Activated CD8-positive, alpha-beta memory T cell treated with anti-CD3 and anti-CD28 coated beads, Interleukin-2, amount 10 ng/mL, durations not matched to agents 7 days and 5 days (primary cell): ENCODE measurements at regions of chr13 and their contacts with region 1.

Region 1: DNA sequence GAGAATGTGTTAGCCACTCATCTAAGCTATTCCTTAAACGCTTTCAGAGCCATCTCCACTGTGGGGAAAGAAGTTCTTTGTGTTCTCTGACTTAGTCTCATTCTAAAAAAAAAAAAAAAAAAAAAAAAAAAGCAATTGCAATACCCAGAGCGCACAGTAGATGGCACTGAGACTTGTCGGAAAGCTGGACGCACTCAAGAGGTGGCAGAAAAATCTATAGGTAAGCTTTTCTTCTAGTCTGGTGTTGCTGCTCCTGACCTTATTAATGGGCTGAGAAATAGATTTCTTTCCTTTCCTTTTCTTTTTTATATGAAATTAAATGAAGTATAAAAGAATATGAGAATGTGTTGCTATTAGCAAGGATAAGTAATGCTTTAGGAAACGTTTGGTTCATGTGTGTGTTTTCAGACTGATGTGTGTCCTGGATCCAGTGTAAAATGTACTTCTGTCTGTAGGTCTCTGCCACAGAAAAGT is 4.7 kb upstream of the GJB2 start:
- DNase-seq: no peak
- ATAC-seq: peak; percentile 48
- H3K4me3 Mint-ChIP-seq: no peak overlapping the region
- H3K27ac Mint-ChIP-seq: no peak overlapping the region
- H3K4me1 Mint-ChIP-seq: peaks cover 21% of the 10 kb centered on the region
- H3K27me3 Mint-ChIP-seq: peaks cover 51% of the 10 kb centered on the region

Region 2: DNA sequence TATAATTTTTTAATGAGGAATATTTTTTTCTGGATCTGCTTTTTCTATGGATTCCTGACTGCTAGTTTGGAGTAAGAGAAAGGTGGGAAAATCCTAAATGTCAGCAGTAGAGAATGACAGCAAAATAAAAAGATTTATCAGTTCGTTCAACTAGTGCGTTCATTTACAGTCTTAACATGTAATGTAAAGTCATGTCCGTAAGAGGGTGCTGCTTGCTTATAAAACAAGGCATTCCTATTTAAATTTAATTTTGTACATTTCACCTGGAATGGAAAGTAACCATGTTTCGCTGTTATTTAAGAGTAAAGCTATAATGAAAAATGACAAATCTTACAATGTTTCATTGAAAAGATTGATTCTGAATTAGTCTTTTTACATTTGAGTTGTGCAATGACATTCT is 162.3 kb before region 1 on chr13:
- CTCF ChIA-PET with region 1: no interaction called
- DNase-seq: no peak
- ATAC-seq: no peak
- H3K4me3 Mint-ChIP-seq: no peak overlapping the region
- H3K27ac Mint-ChIP-seq: no peak overlapping the region
- H3K4me1 Mint-ChIP-seq: peaks cover 5% of the 10 kb centered on the region
- H3K27me3 Mint-ChIP-seq: no peaks in the 10 kb centered on the region

Region 3: GRCh38 chr13:20270163-20270865 is 72.9 kb after region 1 on chr13:
- CTCF ChIA-PET with region 1: no interaction called
- DNase-seq: no peak
- ATAC-seq: no peak
- H3K4me3 Mint-ChIP-seq: no peak overlapping the region
- H3K27ac Mint-ChIP-seq: no peak overlapping the region
- H3K4me1 Mint-ChIP-seq: no peaks in the 10 kb centered on the region
- H3K27me3 Mint-ChIP-seq: peaks cover 10% of the 10 kb centered on the region

Region 4: DNA sequence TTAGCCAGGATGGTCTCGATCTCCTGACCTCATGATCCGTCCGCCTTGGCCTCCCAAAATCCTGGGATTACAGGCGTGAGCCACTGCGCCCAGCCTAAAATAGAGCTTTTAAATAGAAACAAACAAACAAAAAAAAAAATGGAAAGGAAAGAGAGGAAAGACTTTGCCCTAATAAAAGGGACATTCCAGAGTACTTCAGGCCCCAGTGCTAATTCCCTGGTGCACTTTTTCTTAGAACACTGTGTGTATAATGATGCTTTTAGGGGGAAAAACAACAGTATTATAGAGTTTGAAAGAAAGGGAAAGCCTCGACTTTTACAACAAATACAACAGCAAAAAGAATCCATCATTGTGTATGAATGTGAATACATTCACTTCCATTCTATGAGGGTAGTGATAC is 223.5 kb after region 1 on chr13:
- CTCF ChIA-PET with region 1: interaction called, 10 read pairs
- DNase-seq: no peak
- ATAC-seq: no peak
- H3K4me3 Mint-ChIP-seq: no peak overlapping the region
- H3K27ac Mint-ChIP-seq: peak overlapping the region; percentile 17
- H3K4me1 Mint-ChIP-seq: peaks cover 33% of the 10 kb centered on the region
- H3K27me3 Mint-ChIP-seq: no peaks in the 10 kb centered on the region